Activated CD8-positive, alpha-beta memory T cell treated with anti-CD3 and anti-CD28 coated beads, Interleukin-2, amount 10 ng/mL, durations not matched to agents 7 days and 5 days (primary cell): ENCODE measurements at regions of chr3 and their contacts with region 1.

Region 1: DNA sequence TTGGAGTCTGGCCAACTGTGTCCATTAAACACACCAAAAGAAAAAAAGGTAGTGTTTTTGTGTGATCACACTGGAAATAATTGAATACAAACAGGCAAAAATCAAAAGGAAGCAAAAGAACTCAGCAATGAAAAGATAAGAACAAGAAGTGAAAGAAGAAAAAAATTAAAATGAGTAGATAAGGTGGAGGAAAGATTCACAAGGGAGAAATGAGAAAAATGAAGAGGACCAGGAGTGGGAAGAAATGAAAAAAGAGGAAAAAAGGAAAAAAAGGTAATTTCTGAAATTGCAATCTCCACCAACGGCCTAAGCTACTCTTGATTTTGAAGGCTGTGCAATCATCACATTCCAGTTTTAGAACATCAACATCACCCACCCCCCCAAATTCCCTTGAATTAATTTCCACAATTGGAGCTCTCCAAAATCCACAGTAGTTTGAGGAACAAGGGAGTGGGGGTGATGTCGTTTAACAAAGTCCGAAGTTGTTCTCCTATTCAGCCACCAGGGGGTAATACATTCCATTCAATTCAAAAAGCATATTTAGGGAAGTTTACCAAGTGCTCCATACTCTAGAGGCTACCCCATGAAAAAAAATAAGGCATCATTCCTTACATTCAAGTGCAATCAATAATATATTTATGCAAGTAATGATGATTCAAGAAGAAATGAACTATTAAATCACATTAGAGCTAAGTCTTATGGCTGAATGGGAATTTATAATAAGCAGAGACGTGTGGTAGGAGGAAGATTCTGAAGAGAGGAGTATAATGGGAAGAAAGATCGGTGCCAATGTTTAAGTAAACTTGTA is 37.4 kb downstream of the ZNF860 start:
- DNase-seq: no peak
- ATAC-seq: no peak
- H3K4me3 Mint-ChIP-seq: no peak overlapping the region
- H3K27ac Mint-ChIP-seq: no peak overlapping the region
- H3K4me1 Mint-ChIP-seq: no peaks in the 10 kb centered on the region
- H3K27me3 Mint-ChIP-seq: peaks cover 10% of the 10 kb centered on the region

Region 2: GRCh38 chr3:32143849-32144757 is 125.1 kb after region 1 on chr3:
- CTCF ChIA-PET with region 1: interaction called, 54 read pairs
- DNase-seq: peak; percentile 61
- ATAC-seq: peak; percentile 63
- H3K4me3 Mint-ChIP-seq: no peak overlapping the region
- H3K27ac Mint-ChIP-seq: no peak overlapping the region
- H3K4me1 Mint-ChIP-seq: peaks cover 15% of the 10 kb centered on the region
- H3K27me3 Mint-ChIP-seq: no peaks in the 10 kb centered on the region

Region 3: DNA sequence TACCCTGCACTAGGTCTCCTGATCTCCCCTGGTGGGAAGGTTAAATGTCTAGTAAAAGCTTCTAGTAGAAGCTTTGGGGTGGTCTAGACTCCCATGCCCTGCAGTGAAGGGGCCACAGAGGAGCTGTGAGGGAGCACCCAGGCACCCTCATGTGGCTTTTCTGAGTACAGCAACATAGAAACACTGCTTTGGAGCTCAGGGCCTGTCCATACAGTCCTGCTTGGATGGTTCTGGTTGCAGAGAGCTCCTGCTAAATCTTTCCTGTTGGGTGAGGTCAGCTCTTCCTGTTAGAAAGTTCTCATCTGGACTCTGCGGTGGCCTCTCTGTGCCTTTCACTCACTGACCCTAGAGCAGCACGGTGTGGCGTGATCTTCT is 135.2 kb after region 1 on chr3:
- CTCF ChIA-PET with region 1: interaction called, 14 read pairs
- DNase-seq: no peak
- ATAC-seq: no peak
- H3K4me3 Mint-ChIP-seq: no peak overlapping the region
- H3K27ac Mint-ChIP-seq: no peak overlapping the region
- H3K4me1 Mint-ChIP-seq: no peaks in the 10 kb centered on the region
- H3K27me3 Mint-ChIP-seq: no peaks in the 10 kb centered on the region